ENCODE measurements at regions of chr20 and their contacts with region 1.

Region 1: GRCh38 chr20:33401184-33401920 is at the start of gene CDK5RAP1:
- DNase-seq: peak; percentile 93
- ATAC-seq: peak; percentile 93
- H3K4me3 ChIP-seq: peak within 1 kb of the TSS; percentile 84 to 96 (median 85)
- H3K27ac ChIP-seq: peak within 1 kb of the TSS; percentile 59
- H3K4me1 ChIP-seq: peaks cover 26% of the 10 kb centered on the region
- H3K27me3 ChIP-seq: peaks cover 0 to 3% of the 10 kb centered on the region in 2 experiments; a peak in 1 of 5 replicates
- CTCF ChIP-seq: no peak; the same call in none of the 2 replicates
- EP300 ChIP-seq: peak; percentile 56 to 75; a peak in 3 of 4 replicates
- POLR2A ChIP-seq: peak; percentile 91 to 97
- RAD21 ChIP-seq: peak; percentile 70; the same call in 1 of the 2 replicates
- total RNA-seq, gene CDK5RAP1: 98.2 and 104 TPM in 2 replicates

Region 2: GRCh38 chr20:33443512-33444239 is 42.3 kb after region 1 on chr20 and contains the start of gene SNTA1:
- CTCF ChIA-PET with region 1: interaction called, 4 read pairs
- POLR2A ChIA-PET with region 1: interaction called, 19 read pairs
- in situ Hi-C with region 1: no loop called
- intact Hi-C with region 1: loop called (anchors 2 kb)
- DNase-seq: peak; percentile 92
- ATAC-seq: peak; percentile 85
- H3K4me3 ChIP-seq: peak within 1 kb of the TSS; percentile 64 to 95 (median 72)
- H3K27ac ChIP-seq: peak within 1 kb of the TSS; percentile 45
- H3K4me1 ChIP-seq: peaks cover 54% of the 10 kb centered on the region
- H3K27me3 ChIP-seq: peaks cover 0 to 10% of the 10 kb centered on the region in 2 experiments; a peak in 2 of 5 replicates
- CTCF ChIP-seq: no peak
- EP300 ChIP-seq: 0 out of 4 replicates have a peak, but pooled peaks of 1 of the 2 experiments have one; percentile 7
- POLR2A ChIP-seq: no peak; a peak in 1 of 4 replicates
- RAD21 ChIP-seq: peak; percentile 84
- total RNA-seq, gene SNTA1: 14.8 and 16.4 TPM in 2 replicates